PC-9 (cell line): ENCODE measurements at regions of chr3 and their contacts with region 1.

Region 1: DNA sequence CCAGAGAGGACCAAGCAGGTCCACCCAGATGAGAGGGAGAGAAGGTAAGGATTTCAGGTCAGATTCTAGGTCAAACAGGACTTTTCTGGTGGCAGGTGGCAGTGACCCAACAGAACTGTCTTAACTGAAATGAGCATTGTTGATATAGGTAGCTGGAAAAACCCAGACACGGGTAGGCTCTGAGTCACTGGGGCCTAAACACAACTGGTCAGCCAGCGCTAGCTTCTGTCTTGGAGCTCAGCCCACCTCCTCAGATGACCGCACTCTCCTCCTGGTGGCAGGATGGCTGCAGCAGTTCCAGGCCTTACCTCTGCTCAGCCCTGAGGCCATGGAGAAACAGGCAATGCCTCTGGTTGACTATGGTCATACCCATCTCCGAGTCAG is 61.1 kb upstream of the GATA2 start:
- DNase-seq: peak; percentile 56 to 72
- H3K4me3 ChIP-seq: no peak overlapping the region
- H3K27ac ChIP-seq: no peak overlapping the region
- H3K4me1 ChIP-seq: peaks cover 6% of the 10 kb centered on the region; the same call in 1 of the 2 replicates
- H3K27me3 ChIP-seq: no peaks in the 10 kb centered on the region
- CTCF ChIP-seq: no peak; the same call in 1 of the 2 replicates

Region 2: DNA sequence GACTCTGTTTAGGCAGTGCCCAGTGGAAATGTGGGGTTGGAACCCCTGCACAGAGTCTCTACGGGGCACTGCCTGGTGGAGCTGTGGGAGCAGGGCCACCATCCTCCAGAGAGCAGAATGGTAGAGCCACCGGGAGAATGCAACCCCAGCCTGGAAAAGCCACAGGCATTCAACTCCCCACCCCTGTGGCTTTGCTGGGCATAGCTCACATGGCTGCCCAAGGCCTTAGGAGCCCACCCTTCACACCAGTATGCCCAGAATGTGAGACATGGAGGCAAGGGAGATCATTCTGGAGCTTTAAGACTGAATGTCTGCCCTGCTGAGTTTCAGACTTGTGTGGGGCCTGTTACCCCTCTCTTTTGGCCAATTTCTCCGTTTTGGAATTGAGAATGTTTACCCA is 1869.0 kb before region 1 on chr3:
- CTCF ChIA-PET with region 1: no interaction called
- POLR2A ChIA-PET with region 1: interaction called, 12 read pairs
- intact Hi-C with region 1: no loop called
- DNase-seq: no peak
- H3K4me3 ChIP-seq: no peak overlapping the region
- H3K27ac ChIP-seq: no peak overlapping the region
- H3K4me1 ChIP-seq: no peaks in the 10 kb centered on the region
- H3K27me3 ChIP-seq: no peaks in the 10 kb centered on the region
- CTCF ChIP-seq: no peak

Region 3: GRCh38 chr3:128537121-128537703 is 16.8 kb before region 1 on chr3:
- CTCF ChIA-PET with region 1: no interaction called
- POLR2A ChIA-PET with region 1: no interaction called
- intact Hi-C with region 1: no loop called
- DNase-seq: peak; percentile 46 to 77
- H3K4me3 ChIP-seq: no peak overlapping the region
- H3K27ac ChIP-seq: peak overlapping the region; percentile 45
- H3K4me1 ChIP-seq: peaks cover 16% of the 10 kb centered on the region
- H3K27me3 ChIP-seq: 0 out of 2 replicates have a peak, but pooled peaks cover 8% of the 10 kb centered on the region
- CTCF ChIP-seq: no peak